ENCODE measurements at regions of chr9 and their contacts with region 1.

Region 1: DNA sequence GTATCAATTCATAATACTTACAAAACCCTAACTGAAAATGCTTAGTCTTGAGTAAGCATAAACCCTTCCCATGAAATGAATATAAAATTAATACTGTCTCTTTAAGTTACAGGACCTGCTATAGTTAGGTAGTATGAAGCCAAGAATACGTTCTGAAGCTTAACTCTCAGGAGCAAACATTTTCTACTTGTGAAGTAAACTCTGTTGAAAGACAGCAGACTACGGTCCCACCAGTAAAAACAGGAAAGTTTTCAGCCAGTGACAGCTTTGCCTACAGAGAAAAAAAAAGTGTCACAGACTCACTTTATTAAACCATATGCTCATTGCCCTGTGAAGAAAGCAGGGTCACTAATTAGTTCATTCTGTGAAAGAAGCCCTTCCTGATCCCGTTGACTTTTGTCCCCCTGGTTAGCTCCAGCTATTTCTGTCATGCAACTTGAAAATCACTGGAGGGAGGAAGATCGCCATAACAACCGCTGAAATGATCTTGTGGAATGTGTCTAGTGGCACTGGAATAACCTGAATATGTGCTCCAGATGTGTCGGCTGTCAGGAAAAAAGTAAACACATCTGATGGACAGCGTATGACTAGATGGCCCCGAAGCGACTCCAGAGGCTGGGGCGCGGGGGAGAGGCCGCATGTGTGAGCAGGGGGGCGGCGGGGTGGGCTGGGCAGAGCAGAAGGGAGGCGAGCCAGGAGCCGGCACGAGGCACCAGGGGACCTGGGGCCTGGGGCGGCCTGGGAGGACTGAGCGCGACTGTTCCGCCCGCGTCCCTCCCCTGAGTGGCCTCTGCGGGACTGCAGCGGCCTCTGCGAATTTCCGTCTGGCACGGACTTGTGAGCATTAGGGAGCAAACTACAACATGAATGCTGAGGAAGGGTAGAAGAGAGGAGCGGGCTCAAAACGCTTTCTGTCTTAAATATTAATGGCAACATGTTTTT is 41.9 kb downstream of the BNC2 start:
- DNase-seq: no peak
- H3K4me3 ChIP-seq: peak overlapping the region; percentile 49 to 54 (median 50)
- H3K27ac ChIP-seq: peak overlapping the region; percentile 79 to 84 (median 81)
- H3K4me1 ChIP-seq: peaks cover 5 to 94% (median 70%) of the 10 kb centered on the region in 4 donors
- H3K27me3 ChIP-seq: no peaks in the 10 kb centered on the region
- CTCF ChIP-seq: no peak
- EP300 ChIP-seq: no peak
- POLR2A ChIP-seq: no peak

Region 2: DNA sequence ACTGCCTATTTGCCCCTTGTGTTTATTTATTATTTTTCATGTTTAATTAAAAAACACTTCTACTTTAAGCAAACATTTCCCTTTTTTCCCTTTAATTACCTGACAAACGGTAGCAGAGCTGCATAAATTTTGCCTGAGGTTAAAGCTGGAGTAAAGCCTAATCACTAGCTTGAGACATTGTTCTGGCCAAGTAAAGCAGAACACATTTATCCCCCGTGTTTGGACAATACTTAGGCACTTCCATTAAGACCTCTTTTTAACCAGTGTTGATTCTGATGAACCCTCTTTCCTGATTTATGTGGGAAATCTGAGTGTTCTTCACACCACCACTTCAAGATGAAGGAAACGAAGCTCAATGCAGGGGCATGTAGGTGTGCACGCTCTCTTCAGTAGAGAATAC is 12.6 kb before region 1 on chr9:
- intact Hi-C with region 1: loop called (anchors 1 kb)
- DNase-seq: no peak
- H3K4me3 ChIP-seq: no peak overlapping the region
- H3K27ac ChIP-seq: no peak overlapping the region
- H3K4me1 ChIP-seq: peaks cover 0 to 61% (median 50%) of the 10 kb centered on the region in 4 donors
- H3K27me3 ChIP-seq: no peaks in the 10 kb centered on the region
- CTCF ChIP-seq: no peak
- EP300 ChIP-seq: no peak
- POLR2A ChIP-seq: no peak